T-cell (primary cell): ENCODE measurements at regions of chr11 and their contacts with region 1.

Region 1: GRCh38 chr11:130894322-130895025 is 21.8 kb downstream of the SNX19 start:
- DNase-seq: peak; percentile 13 to 80 (median 51)
- ATAC-seq: peak; percentile 61 to 83 (median 79)
- H3K4me3 ChIP-seq: no peak overlapping the region
- H3K4me3 Mint-ChIP-seq: no peak overlapping the region
- H3K27ac ChIP-seq: no peak overlapping the region
- H3K27ac Mint-ChIP-seq: no peak overlapping the region
- H3K4me1 ChIP-seq: peaks cover 0 to 2% of the 10 kb centered on the region in 2 experiments
- H3K4me1 Mint-ChIP-seq: peaks cover 6 to 9% (median 9%) of the 10 kb centered on the region in 3 donors
- H3K27me3 ChIP-seq: no peaks in the 10 kb centered on the region
- H3K27me3 Mint-ChIP-seq: no peaks in the 10 kb centered on the region

Region 2: DNA sequence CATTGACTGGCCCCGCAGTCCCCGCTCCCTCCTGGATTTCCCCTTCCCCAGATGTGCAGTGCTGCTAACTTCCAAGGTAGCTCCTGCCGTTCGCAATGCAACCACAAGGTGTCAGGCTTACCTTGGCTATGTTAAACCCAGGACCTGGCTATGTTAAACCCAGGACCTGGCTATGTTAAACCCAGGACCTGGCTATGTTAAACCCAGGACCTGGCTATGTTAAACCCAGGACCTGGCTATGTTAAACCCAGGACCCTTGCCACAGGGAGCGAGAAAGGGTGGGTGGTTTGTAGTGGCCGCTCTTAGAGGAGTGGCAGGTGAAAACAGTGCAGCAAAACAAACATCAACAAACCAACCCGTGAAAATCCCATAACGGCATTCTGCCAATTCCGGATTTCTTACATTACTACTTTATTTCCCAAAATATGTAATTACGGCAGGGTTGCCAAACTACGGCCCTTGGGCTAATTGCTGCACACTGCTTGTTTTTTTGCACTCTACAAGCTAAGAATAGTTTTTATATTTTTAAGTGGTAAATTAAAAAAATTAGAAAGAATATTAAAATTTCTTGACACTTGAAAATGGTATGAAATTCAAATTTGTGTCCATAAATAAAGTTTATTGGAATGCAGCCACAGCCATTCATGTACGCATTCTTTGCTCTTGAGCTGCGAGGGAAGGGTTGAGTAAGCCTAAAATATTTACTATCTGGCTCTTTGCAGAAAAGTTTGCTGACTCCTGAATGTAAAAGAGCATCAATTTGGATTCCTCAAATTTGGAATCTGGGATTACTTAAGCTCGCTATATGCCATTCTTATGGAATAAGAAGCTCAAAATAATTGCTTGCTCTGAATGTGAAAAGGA is 462.9 kb before region 1 on chr11:
- CTCF ChIA-PET with region 1: interaction called, 4 to 12 read pairs
- POLR2A ChIA-PET with region 1: no interaction called
- DNase-seq: peak; percentile 14 to 80 (median 55)
- ATAC-seq: peak in 3 of 4 experiments; percentile 28 to 64 (median 48)
- H3K4me3 ChIP-seq: no peak overlapping the region
- H3K4me3 Mint-ChIP-seq: no peak overlapping the region
- H3K27ac ChIP-seq: no peak overlapping the region
- H3K27ac Mint-ChIP-seq: no peak overlapping the region
- H3K4me1 ChIP-seq: peaks cover 0 to 3% of the 10 kb centered on the region in 2 experiments
- H3K4me1 Mint-ChIP-seq: peaks cover 6 to 15% (median 15%) of the 10 kb centered on the region in 3 donors
- H3K27me3 ChIP-seq: peaks cover 18 to 40% of the 10 kb centered on the region in 2 experiments
- H3K27me3 Mint-ChIP-seq: peaks cover 37% of the 10 kb centered on the region in 2 donors

Region 3: DNA sequence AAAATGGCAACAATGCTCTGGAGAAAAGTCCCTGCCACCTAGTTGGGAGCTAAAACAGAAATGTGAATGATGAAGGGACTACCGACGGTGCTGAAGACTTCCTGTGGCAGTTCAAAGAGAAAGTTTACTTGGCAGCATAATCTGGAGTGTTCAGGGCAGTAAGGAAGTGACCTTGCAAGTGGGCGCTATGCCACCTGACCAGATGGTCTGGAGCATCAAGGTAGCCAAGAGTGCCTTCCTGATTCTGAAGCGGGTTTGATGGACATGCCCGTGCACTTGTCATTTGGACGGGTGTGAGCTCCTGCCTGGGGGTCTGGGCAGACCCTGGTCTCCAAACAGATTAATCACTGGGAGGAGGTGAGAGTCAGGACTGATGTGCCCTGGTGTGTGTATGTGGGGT is 23.6 kb after region 1 on chr11:
- CTCF ChIA-PET with region 1: interaction called, 5 to 13 read pairs
- POLR2A ChIA-PET with region 1: no interaction called
- DNase-seq: no peak
- ATAC-seq: no peak
- H3K4me3 ChIP-seq: no peak overlapping the region
- H3K4me3 Mint-ChIP-seq: no peak overlapping the region
- H3K27ac ChIP-seq: no peak overlapping the region
- H3K27ac Mint-ChIP-seq: no peak overlapping the region
- H3K4me1 ChIP-seq: peaks cover 3 to 32% of the 10 kb centered on the region in 2 experiments
- H3K4me1 Mint-ChIP-seq: peaks cover 10 to 34% (median 29%) of the 10 kb centered on the region in 3 donors
- H3K27me3 ChIP-seq: peaks cover 0 to 10% of the 10 kb centered on the region in 2 experiments
- H3K27me3 Mint-ChIP-seq: peaks cover 17 to 21% of the 10 kb centered on the region in 2 donors